SK-N-SH (cell line): ENCODE measurements at regions of chr3 and their contacts with region 1.

Region 1: DNA sequence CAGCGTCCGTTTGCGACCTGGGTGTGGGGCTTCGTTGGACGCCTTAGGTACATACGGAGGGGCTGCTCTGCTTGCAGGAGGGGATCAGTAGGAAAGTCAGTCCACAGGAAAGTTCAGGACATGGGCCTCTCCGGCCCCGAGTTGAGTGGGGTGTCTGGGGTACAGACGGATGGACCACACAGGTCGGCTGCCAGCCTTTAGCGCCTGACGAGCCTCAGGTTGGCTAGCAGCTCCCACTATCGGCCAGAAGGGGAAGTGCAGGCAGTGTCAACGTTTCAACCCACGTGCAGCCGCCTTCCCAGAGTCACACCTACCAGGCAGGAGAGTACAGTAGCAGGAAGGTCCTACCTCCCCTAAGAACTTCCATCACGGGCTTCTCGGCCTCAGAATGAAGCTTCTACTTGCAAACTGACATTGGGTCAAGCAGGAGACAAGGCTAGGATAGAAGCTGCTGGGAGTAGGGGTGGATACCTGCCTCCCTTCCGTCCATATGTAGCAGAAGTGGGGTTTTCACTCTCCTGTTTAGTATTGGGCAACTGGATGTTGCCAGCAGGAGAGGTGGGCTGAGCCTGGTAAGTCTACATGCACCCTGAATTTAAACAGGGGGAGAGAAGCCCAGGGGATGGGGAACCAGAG is 1.8 kb upstream of the SCN5A start:
- DNase-seq: peak; percentile 79
- H3K4me3 ChIP-seq: peak overlapping the region in 1 of 2 experiments; percentile 28; a peak in 1 of 4 replicates
- H3K27ac ChIP-seq: no peak overlapping the region
- H3K4me1 ChIP-seq: peaks cover 0 to 17% of the 10 kb centered on the region in 2 experiments; a peak in 1 of 4 replicates
- H3K27me3 ChIP-seq: peaks cover 12% of the 10 kb centered on the region; the same call in 1 of the 2 replicates
- CTCF ChIP-seq: peak; percentile 90
- EP300 ChIP-seq: no peak
- RAD21 ChIP-seq: peak; percentile 96

Region 2: GRCh38 chr3:38018296-38019266 is 632.7 kb before region 1 on chr3:
- CTCF ChIA-PET with region 1: no interaction called
- POLR2A ChIA-PET with region 1: no interaction called
- DNase-seq: no peak
- H3K4me3 ChIP-seq: no peak overlapping the region
- H3K27ac ChIP-seq: peak overlapping the region in 1 of 2 experiments; percentile 39; a peak in 1 of 4 replicates
- H3K4me1 ChIP-seq: peaks cover 0 to 38% of the 10 kb centered on the region in 2 experiments; a peak in 1 of 4 replicates
- H3K27me3 ChIP-seq: no peaks in the 10 kb centered on the region
- CTCF ChIP-seq: no peak
- EP300 ChIP-seq: no peak
- RAD21 ChIP-seq: no peak

Region 3: GRCh38 chr3:38490281-38491030 is 160.8 kb before region 1 on chr3:
- CTCF ChIA-PET with region 1: interaction called, 54 read pairs
- POLR2A ChIA-PET with region 1: no interaction called
- DNase-seq: no peak
- H3K4me3 ChIP-seq: no peak overlapping the region
- H3K27ac ChIP-seq: no peak overlapping the region
- H3K4me1 ChIP-seq: peaks cover 0 to 7% of the 10 kb centered on the region in 2 experiments; a peak in 1 of 4 replicates
- H3K27me3 ChIP-seq: no peaks in the 10 kb centered on the region
- CTCF ChIP-seq: no peak
- EP300 ChIP-seq: no peak
- RAD21 ChIP-seq: no peak

Region 4: DNA sequence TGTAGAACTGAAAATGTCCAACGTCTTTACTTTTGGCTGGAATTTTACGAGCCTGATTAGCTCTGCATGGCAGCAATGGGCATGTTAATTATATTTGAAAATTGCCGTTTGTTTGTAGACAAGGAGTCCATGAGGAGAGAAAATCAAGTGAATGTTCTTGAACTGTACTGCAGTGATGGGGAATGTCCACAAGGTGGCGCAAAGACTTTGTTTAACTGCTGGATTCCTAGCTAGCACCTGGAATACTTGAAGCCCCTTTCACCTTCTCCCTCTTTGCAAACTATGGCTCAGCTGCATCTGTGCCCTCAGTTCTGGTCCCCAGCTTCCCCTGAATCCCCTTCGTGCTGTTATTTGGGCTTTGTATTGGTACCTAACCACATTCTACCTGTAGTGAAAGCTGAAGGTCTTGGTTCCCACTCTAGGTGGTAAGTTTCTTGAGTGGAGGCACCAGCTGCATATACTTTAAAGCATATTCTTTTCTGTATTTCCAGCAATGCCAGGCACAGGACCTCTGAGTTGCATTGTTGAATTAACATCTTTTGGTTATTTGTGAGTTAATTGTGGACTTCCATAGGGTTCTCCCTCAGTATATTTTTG is 129.8 kb before region 1 on chr3:
- CTCF ChIA-PET with region 1: interaction called, 556 read pairs
- POLR2A ChIA-PET with region 1: interaction called, 4 read pairs
- DNase-seq: peak; percentile 70
- H3K4me3 ChIP-seq: peak overlapping the region in 1 of 2 experiments; percentile 13; a peak in 1 of 4 replicates
- H3K27ac ChIP-seq: no peak overlapping the region
- H3K4me1 ChIP-seq: peaks cover 0 to 4% of the 10 kb centered on the region in 2 experiments; a peak in 3 of 4 replicates
- H3K27me3 ChIP-seq: no peaks in the 10 kb centered on the region
- CTCF ChIP-seq: peak; percentile 94
- EP300 ChIP-seq: no peak
- RAD21 ChIP-seq: peak; percentile 92

Region 5: DNA sequence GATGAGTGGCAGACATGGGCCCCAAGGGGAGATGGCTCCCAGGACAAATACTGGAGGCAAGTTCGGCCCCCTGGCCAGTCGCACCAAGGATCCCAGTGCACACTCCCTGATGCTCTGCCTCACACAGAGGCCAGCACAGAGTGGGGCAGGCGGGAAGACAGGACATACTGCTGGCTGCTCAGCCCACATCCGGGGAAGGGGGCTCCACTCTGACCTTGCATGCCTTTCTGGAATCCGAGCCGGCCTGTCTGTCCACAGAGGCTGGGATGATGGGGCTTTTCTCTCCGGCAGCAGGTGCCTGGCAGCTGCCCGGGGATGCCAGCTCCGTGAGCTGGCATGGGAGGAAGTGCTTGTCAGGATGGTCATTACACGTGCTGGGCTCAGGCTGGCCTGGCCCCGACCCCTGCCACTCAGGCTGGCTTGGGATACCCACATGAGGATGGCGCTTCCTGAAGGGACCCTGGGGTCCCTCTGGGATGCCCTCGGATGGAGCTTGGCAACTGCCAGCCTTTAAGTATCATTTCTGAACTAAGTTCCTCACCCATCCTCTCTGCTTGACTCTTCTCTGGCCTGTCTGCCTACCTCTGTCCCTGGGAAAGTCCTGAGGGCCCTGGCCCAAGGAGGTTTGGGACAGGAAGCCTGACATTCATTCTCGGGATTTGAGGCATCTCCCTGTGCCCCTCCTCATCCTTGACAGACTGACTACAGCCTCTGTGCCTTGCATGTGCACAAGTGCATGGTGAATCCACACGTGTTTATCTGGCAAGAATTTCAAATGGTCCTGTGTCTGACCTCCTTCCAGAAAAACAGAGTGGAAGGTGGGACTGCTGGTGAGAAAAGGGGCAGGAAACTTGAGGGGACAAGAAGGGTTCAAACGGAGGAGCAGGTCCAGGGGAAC is 108.6 kb before region 1 on chr3:
- CTCF ChIA-PET with region 1: interaction called, 11 read pairs
- POLR2A ChIA-PET with region 1: no interaction called
- DNase-seq: peak; percentile 36
- H3K4me3 ChIP-seq: no peak overlapping the region
- H3K27ac ChIP-seq: no peak overlapping the region
- H3K4me1 ChIP-seq: peaks cover 0 to 22% of the 10 kb centered on the region in 2 experiments; a peak in 1 of 4 replicates
- H3K27me3 ChIP-seq: no peaks in the 10 kb centered on the region
- CTCF ChIP-seq: no peak
- EP300 ChIP-seq: peak in 1 of 2 experiments; percentile 46; a peak in 1 of 4 replicates
- RAD21 ChIP-seq: no peak

Region 6: GRCh38 chr3:38579551-38580449 is 71.5 kb before region 1 on chr3:
- CTCF ChIA-PET with region 1: interaction called, 33 read pairs
- POLR2A ChIA-PET with region 1: no interaction called
- DNase-seq: peak; percentile 52
- H3K4me3 ChIP-seq: no peak overlapping the region
- H3K27ac ChIP-seq: peak overlapping the region in 1 of 2 experiments; percentile 93; a peak in 2 of 4 replicates
- H3K4me1 ChIP-seq: peaks cover 0 to 84% of the 10 kb centered on the region in 2 experiments; a peak in 2 of 4 replicates
- H3K27me3 ChIP-seq: no peaks in the 10 kb centered on the region
- CTCF ChIP-seq: no peak
- EP300 ChIP-seq: no peak
- RAD21 ChIP-seq: no peak

Region 7: DNA sequence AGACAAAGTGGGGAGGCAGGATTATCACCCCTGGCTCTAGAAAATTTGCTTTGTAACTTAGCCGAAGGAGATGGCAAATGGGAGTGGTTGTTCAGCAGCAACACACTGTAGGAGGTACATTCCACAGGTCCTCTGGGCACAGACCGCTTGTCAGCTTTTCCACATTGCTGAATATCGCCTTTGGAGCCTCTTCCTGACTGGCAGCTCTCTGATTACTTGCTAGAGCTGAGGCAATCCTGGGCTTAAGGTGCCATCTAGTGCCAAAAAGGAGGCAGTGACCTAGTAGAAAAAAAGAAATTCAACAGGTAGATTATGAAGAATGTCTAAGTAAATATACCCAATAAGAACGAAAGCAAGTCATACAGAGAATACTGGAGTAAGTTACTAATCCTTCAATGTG is 11.3 kb after region 1 on chr3:
- CTCF ChIA-PET with region 1: interaction called, 31 read pairs
- POLR2A ChIA-PET with region 1: no interaction called
- DNase-seq: no peak
- H3K4me3 ChIP-seq: no peak overlapping the region
- H3K27ac ChIP-seq: no peak overlapping the region
- H3K4me1 ChIP-seq: peaks cover 0 to 11% of the 10 kb centered on the region in 2 experiments; a peak in 1 of 4 replicates
- H3K27me3 ChIP-seq: no peaks in the 10 kb centered on the region
- CTCF ChIP-seq: peak; percentile 48
- EP300 ChIP-seq: no peak
- RAD21 ChIP-seq: peak; percentile 72

Region 8: DNA sequence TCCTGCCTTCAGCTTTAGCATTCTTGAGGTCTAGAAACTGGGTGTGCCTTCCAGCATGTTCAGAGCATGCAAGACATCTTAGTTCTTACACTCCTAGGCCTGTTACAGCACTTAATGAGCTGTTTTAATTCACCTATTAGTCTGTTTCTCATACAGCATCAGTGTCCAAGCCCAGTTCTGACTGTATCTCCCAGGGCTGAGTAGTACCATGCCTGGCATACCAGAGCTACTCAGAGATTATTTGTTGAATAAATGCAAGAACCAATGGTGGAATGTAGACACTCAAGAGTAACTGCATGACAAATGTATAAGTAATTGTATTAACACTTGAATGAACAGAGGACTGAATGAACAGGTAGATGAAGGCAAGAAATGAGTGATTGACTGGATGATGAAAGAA is 60.1 kb after region 1 on chr3:
- CTCF ChIA-PET with region 1: no interaction called
- POLR2A ChIA-PET with region 1: no interaction called
- DNase-seq: no peak
- H3K4me3 ChIP-seq: no peak overlapping the region
- H3K27ac ChIP-seq: no peak overlapping the region
- H3K4me1 ChIP-seq: no peaks in the 10 kb centered on the region
- H3K27me3 ChIP-seq: no peaks in the 10 kb centered on the region
- CTCF ChIP-seq: no peak
- EP300 ChIP-seq: no peak
- RAD21 ChIP-seq: no peak

Region 9: GRCh38 chr3:38843898-38844297 is 192.6 kb after region 1 on chr3:
- CTCF ChIA-PET with region 1: interaction called, 26 read pairs
- POLR2A ChIA-PET with region 1: no interaction called
- DNase-seq: peak; percentile 54
- H3K4me3 ChIP-seq: no peak overlapping the region
- H3K27ac ChIP-seq: no peak overlapping the region
- H3K4me1 ChIP-seq: peaks cover 0 to 2% of the 10 kb centered on the region in 2 experiments; a peak in 2 of 4 replicates
- H3K27me3 ChIP-seq: no peaks in the 10 kb centered on the region; the same call in 1 of the 2 replicates
- CTCF ChIP-seq: peak; percentile 67
- EP300 ChIP-seq: no peak
- RAD21 ChIP-seq: peak; percentile 91